Activated naive CD4-positive, alpha-beta T cell treated with anti-CD3 and anti-CD28 coated beads for 36 hours (primary cell): ENCODE measurements at regions of chr13 and their contacts with region 1.

Region 1: DNA sequence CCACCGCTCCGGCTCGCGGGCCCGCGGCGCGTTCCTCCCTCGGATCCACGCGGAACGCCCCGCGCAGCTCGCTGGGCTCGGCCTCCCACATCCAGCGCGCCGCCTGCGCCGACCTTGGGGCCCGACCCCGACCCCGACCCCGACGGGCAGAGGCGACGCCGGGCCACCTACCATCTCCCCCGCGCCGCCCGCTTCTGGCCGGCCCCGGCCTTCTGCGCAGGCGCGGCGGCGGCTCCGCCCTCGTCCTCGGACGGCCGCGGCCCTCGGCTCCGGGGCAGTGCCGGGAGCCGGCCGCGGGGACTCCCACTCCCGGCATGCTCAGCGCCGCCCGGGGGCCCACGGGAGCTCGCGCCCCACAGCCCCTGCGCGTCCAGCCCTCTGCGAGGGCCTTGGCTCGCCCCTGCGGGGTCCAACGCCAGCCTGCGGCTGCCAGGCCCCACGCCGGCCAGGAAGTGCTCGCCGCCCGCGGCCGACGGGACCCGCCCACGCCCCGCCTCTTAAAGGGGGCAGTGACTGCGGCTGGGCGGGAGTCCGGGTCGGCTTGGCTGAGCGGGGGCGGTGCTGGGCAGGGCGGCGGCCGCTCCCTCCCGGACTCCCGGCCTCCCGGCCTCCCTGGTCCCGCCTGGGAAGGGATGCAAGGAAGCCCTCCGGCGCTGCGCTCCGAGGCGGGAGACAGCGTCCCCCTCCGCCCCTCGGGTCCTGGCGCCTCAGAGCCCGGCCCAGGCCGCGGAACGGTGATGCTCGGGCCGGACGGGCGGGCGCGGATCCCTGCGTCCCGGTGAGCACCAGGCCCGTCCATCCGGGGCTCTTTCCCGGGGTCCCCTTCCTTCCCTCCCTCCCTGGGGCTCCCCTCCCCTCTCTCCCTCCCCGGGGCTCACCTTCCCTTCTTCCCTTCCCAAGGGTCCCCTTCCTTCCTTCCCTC is at the start of gene DCUN1D2:
- DNase-seq: peak; percentile 70
- H3K4me3 Mint-ChIP-seq: peak within 1 kb of the TSS; percentile 96
- H3K27ac Mint-ChIP-seq: peak within 1 kb of the TSS; percentile 85
- H3K4me1 Mint-ChIP-seq: peaks cover 64% of the 10 kb centered on the region
- H3K27me3 Mint-ChIP-seq: no peaks in the 10 kb centered on the region
- total RNA-seq, gene DCUN1D2: 14.3 to 14.7 TPM

Region 2: DNA sequence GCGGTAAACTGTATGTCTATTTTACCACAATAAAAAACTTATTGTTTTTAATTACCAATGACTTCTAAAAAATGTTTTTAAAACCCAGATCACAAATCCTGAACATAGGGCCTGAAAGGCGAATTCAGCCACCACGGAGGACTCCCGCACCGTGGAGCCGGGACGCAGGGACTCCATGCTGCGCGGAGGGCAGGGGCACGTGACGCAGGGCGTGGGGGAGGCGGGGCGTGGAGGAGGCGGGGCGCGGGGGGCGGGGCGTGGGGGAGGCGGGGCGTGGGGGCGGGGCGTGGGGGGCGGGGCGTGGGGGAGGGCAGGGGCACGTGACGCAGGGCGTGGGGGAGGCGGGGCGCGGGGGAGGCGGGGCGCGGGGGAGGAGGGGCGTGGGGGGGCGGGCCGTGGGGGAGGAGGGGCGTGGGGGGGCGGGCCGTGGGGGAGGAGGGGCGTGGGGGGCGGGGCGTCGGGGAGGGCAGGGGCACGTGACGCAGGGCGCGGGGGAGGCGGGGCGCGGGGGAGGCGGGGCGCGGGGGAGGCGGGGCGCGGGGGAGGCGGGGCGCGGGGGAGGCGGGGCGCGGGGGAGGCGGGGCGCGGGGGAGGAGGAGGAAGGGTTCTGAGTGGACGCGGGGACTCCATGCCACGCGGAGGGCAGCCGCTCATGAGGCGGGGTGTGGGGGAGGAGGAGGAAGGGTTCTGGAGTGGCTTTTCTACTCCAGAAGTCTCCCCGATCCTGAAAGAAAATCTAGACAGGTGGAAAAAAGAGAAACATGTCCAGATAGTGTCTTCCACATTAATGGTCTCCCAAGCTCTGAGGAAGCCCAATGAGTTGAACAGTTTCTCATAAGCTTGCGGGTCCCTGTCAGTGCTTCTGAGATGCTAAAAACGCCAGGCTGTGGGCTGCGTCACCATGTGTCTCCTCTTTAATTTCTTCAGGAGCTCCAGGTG is 336.7 kb before region 1 on chr13:
- CTCF ChIA-PET with region 1: interaction called, 3 read pairs
- intact Hi-C with region 1: loop called (anchors 2 kb)
- DNase-seq: peak; percentile 68
- H3K4me3 Mint-ChIP-seq: peak overlapping the region; percentile 71
- H3K27ac Mint-ChIP-seq: peak overlapping the region; percentile 10
- H3K4me1 Mint-ChIP-seq: peaks cover 17% of the 10 kb centered on the region
- H3K27me3 Mint-ChIP-seq: peaks cover 4% of the 10 kb centered on the region

Region 3: GRCh38 chr13:113584205-113584869 is 93.6 kb after region 1 on chr13 and contains the start of gene TFDP1:
- CTCF ChIA-PET with region 1: no interaction called
- intact Hi-C with region 1: loop called (anchors 1 kb)
- DNase-seq: peak; percentile 84
- H3K4me3 Mint-ChIP-seq: peak within 1 kb of the TSS; percentile 93
- H3K27ac Mint-ChIP-seq: peak within 1 kb of the TSS; percentile 82
- H3K4me1 Mint-ChIP-seq: peaks cover 36% of the 10 kb centered on the region
- H3K27me3 Mint-ChIP-seq: no peaks in the 10 kb centered on the region
- total RNA-seq, gene TFDP1: 157 to 161 TPM